PC-9 (cell line): ENCODE measurements at regions of chr12 and their contacts with region 1.

Region 1: GRCh38 chr12:39692258-39692853 is 72.8 kb upstream of the ABCD2 start:
- DNase-seq: no peak
- H3K4me3 ChIP-seq: no peak overlapping the region
- H3K27ac ChIP-seq: no peak overlapping the region
- H3K4me1 ChIP-seq: 0 out of 2 replicates have a peak, but pooled peaks cover 2% of the 10 kb centered on the region
- H3K27me3 ChIP-seq: no peaks in the 10 kb centered on the region
- CTCF ChIP-seq: peak; percentile 67

Region 2: DNA sequence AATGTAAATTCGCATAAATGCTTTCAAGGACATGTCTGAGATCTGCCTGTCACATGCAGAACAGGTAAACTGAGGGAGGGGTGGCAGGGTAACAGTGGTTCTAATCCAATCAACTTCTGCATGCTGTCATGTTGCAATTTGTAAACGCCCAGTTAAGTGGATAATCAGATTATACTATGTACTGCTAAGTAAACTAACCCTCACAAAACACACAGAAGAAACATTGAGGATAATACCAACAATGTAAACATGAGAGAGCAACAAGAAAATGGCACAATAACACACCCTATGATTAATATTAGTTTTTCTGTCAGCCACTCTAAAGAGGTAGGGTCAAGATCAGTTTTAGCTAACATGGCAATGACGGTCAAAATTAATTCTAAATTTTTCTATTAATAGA is 373.2 kb before region 1 on chr12:
- CTCF ChIA-PET with region 1: no interaction called
- POLR2A ChIA-PET with region 1: no interaction called
- intact Hi-C with region 1: loop called (anchors 2 kb)
- DNase-seq: no peak
- H3K4me3 ChIP-seq: no peak overlapping the region
- H3K27ac ChIP-seq: no peak overlapping the region
- H3K4me1 ChIP-seq: no peaks in the 10 kb centered on the region
- H3K27me3 ChIP-seq: no peaks in the 10 kb centered on the region
- CTCF ChIP-seq: no peak

Region 3: DNA sequence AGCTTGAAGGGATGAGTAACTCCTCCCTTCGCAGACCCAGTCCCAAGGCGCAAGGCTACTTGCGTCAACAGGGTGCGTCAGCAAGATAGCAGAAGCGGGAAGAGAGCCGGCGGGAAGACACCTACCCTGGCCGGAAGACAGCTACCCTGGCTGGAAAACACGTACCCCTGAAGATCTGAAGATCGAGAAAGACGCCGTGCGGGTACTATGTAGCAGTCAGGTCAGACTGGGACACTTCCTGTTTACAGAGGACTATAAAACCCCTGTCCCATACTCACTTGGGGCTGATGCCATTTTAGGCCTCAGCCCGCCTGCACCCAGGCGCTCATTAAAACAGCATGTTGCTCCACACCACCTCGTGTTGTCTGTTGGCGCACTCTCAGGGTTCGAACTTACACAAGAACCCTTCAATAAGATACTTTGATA is 153.7 kb before region 1 on chr12:
- CTCF ChIA-PET with region 1: no interaction called
- POLR2A ChIA-PET with region 1: no interaction called
- intact Hi-C with region 1: loop called (anchors 10 kb)
- DNase-seq: no peak
- H3K4me3 ChIP-seq: no peak overlapping the region
- H3K27ac ChIP-seq: no peak overlapping the region
- H3K4me1 ChIP-seq: no peaks in the 10 kb centered on the region
- H3K27me3 ChIP-seq: no peaks in the 10 kb centered on the region
- CTCF ChIP-seq: no peak

Region 4: DNA sequence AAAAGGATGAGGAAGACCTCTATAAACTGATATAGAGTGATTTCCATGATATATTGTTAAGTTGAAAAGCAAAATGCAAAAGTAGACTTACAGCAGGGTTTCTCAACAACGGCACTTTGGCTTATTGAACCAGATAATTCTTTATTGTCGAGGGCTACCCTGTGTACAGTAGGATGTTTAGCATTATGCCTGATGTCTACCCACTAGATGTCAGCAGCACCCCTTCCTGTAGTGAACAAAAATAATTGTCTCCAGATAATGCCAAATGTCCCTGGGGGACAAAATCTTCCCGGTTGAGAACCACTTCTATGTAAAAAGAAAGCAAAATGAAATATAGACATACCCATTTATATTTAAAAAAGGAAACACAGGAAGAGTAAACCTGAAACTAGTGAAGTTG is 105.1 kb before region 1 on chr12:
- CTCF ChIA-PET with region 1: no interaction called
- POLR2A ChIA-PET with region 1: no interaction called
- intact Hi-C with region 1: loop called (anchors 10 kb)
- DNase-seq: no peak
- H3K4me3 ChIP-seq: no peak overlapping the region
- H3K27ac ChIP-seq: no peak overlapping the region
- H3K4me1 ChIP-seq: peaks cover 1% of the 10 kb centered on the region
- H3K27me3 ChIP-seq: no peaks in the 10 kb centered on the region
- CTCF ChIP-seq: peak; percentile 34

Region 5: GRCh38 chr12:39764944-39765560 is 72.7 kb after region 1 on chr12:
- CTCF ChIA-PET with region 1: no interaction called
- POLR2A ChIA-PET with region 1: no interaction called
- intact Hi-C with region 1: no loop called
- DNase-seq: no peak
- H3K4me3 ChIP-seq: no peak overlapping the region
- H3K27ac ChIP-seq: no peak overlapping the region
- H3K4me1 ChIP-seq: no peaks in the 10 kb centered on the region
- H3K27me3 ChIP-seq: no peaks in the 10 kb centered on the region
- CTCF ChIP-seq: peak; percentile 90